ENCODE measurements at regions of chr18 and their contacts with region 1.

Region 1: DNA sequence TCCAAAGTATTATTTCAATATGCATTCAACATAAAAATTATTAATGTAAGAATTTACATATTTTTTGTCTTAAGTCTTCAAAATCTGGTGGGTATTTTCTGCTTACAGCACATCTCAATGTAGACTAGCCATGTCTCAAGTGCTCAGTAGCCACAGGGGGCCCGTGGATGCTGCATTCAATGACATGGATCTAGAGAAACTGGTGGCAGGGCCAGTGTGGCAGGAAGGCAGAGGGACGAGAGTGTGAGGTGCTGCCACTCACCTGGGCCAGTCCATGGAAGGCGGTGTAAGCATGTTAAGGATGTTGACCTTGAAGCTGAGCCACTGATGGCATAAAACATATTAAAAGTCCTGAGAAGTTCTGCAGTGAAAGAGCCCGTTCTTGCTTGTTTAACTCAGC is 6.2 kb upstream of the LIPG start:
- DNase-seq: no peak
- H3K4me3 ChIP-seq: no peak overlapping the region
- H3K27ac ChIP-seq: no peak overlapping the region
- H3K4me1 ChIP-seq: peaks cover under 1% of the 10 kb centered on the region
- H3K27me3 ChIP-seq: peaks cover 11% of the 10 kb centered on the region
- CTCF ChIP-seq: no peak

Region 2: GRCh38 chr18:49510393-49511115 is 45.1 kb before region 1 on chr18:
- CTCF ChIA-PET with region 1: no interaction called
- POLR2A ChIA-PET with region 1: no interaction called
- intact Hi-C with region 1: loop called (anchors 5 kb)
- DNase-seq: peak; percentile 74
- H3K4me3 ChIP-seq: no peak overlapping the region
- H3K27ac ChIP-seq: no peak overlapping the region
- H3K4me1 ChIP-seq: peaks cover 2% of the 10 kb centered on the region
- H3K27me3 ChIP-seq: no peaks in the 10 kb centered on the region
- CTCF ChIP-seq: peak; percentile 92

Region 3: GRCh38 chr18:49768051-49768391 is 212.4 kb after region 1 on chr18:
- CTCF ChIA-PET with region 1: no interaction called
- POLR2A ChIA-PET with region 1: no interaction called
- intact Hi-C with region 1: no loop called
- DNase-seq: peak; percentile 64
- H3K4me3 ChIP-seq: no peak overlapping the region
- H3K27ac ChIP-seq: no peak overlapping the region
- H3K4me1 ChIP-seq: no peaks in the 10 kb centered on the region
- H3K27me3 ChIP-seq: no peaks in the 10 kb centered on the region
- CTCF ChIP-seq: peak; percentile 68